ENCODE measurements at regions of chr3 and their contacts with region 1.

Region 1: GRCh38 chr3:106609666-106610301 is 741.0 kb upstream of the CBLB start:
- DNase-seq: peak; percentile 58 to 73 (median 68)
- H3K4me3 ChIP-seq: no peak overlapping the region
- H3K4me3 Mint-ChIP-seq: no peak overlapping the region
- H3K27ac ChIP-seq: no peak overlapping the region
- H3K27ac Mint-ChIP-seq: no peak overlapping the region
- H3K4me1 ChIP-seq: no peaks in the 10 kb centered on the region
- H3K4me1 Mint-ChIP-seq: peaks cover 1 to 6% (median 4%) of the 10 kb centered on the region in 4 donors
- H3K27me3 ChIP-seq: no peaks in the 10 kb centered on the region
- H3K27me3 Mint-ChIP-seq: peaks cover 0 to 1% of the 10 kb centered on the region in 2 donors

Region 2: GRCh38 chr3:106083207-106083606 is 526.6 kb before region 1 on chr3:
- CTCF ChIA-PET with region 1: no interaction called
- POLR2A ChIA-PET with region 1: no interaction called
- intact Hi-C with region 1: loop called (anchors 10 kb)
- DNase-seq: no peak
- H3K4me3 ChIP-seq: no peak overlapping the region
- H3K4me3 Mint-ChIP-seq: no peak overlapping the region
- H3K27ac ChIP-seq: no peak overlapping the region
- H3K27ac Mint-ChIP-seq: no peak overlapping the region
- H3K4me1 ChIP-seq: no peaks in the 10 kb centered on the region
- H3K4me1 Mint-ChIP-seq: peaks cover 0 to 3% (median under 1%) of the 10 kb centered on the region in 4 donors
- H3K27me3 ChIP-seq: no peaks in the 10 kb centered on the region
- H3K27me3 Mint-ChIP-seq: no peaks in the 10 kb centered on the region

Measured in CD4-positive, alpha-beta memory T cell (primary cell).